ENCODE measurements at regions of chr17 and their contacts with region 1.

Region 1: DNA sequence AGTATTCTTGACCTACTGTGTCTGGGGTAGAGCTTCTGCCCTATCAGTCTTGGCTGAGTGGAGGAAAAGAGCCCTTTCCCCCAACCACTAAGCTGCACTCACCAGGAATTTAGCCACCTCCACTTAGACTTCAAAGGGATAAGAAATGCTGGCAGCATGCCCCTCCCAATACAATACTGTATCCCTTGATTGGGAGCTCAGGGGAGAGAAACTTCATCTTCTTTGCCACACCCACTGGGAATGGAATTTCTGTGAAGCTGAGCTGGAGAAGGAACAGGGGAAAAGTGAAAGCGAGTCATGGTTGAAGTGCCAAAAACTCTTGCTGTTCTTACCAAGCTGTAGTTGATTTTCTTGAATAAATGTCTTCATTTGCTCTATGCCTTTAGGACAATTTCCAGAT is 68.8 kb downstream of the CEP112 start:
- DNase-seq: no peak
- H3K4me3 ChIP-seq: no peak overlapping the region
- H3K27ac ChIP-seq: no peak overlapping the region
- H3K4me1 ChIP-seq: no peaks in the 10 kb centered on the region
- CTCF ChIP-seq: no peak

Region 2: GRCh38 chr17:66149562-66149961 is 26.4 kb after region 1 on chr17:
- CTCF ChIA-PET with region 1: no interaction called
- POLR2A ChIA-PET with region 1: no interaction called
- intact Hi-C with region 1: loop called (anchors 2 kb)
- DNase-seq: no peak
- H3K4me3 ChIP-seq: no peak overlapping the region
- H3K27ac ChIP-seq: no peak overlapping the region
- H3K4me1 ChIP-seq: peaks cover 6% of the 10 kb centered on the region
- CTCF ChIP-seq: no peak